ENCODE measurements at regions of chr5 and their contacts with region 1.

Region 1: DNA sequence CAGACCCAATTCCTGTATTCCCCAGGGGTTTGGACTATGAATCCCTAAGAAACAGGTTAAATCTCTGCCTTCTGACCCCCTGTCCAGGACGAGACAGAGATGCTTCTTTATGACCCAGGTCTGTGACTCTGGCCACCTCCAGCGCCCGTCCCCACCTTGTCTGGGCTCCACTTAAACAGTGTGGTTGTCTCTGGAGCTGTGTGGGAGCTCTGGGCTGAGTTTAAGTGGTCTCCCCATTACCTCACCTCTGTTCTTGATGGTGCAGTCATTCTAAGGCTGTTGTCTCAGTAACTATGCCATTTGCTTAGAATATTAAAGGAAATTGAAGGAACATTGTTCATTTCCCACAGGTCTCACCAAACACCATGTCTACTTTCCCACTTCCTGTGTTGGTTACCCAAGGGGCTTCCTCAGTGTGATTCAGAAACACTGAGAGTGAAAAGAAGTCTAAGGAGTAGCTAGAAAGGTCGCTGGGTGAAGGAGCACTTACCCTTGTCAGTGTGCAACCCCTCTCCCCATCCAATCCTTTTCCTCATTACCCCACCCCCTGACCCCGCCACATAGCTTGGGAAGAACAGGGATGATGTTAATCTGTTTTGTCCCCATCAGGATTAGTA is 127.8 kb upstream of the CKMT2 start:
- DNase-seq: no peak
- ATAC-seq: peak; percentile 47
- H3K4me3 Mint-ChIP-seq: no peak overlapping the region
- H3K27ac Mint-ChIP-seq: peak overlapping the region; percentile 42
- H3K4me1 Mint-ChIP-seq: peaks cover 23% of the 10 kb centered on the region
- H3K27me3 Mint-ChIP-seq: no peaks in the 10 kb centered on the region

Region 2: DNA sequence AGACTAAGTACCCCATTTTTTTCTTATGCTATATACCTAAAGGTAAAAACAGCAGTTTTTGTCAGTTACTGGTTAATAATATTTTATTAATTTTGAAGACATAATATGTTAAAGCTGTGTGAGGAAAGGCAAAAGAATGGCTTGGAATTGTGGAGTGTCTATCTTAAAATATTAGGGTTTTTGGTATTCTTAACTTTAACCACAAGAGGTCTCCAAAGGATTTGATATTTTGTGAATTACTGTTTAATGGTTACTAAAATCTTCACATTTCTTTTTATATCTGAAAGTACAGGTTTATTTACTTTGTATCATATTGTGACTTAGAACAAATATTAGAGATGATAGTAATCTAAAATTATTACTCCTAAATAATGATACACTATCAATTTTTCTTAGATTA is 418.6 kb before region 1 on chr5:
- CTCF ChIA-PET with region 1: interaction called, 12 read pairs
- POLR2A ChIA-PET with region 1: no interaction called
- intact Hi-C with region 1: loop called (anchors 1 to 2 kb)
- DNase-seq: no peak
- ATAC-seq: no peak
- H3K4me3 Mint-ChIP-seq: no peak overlapping the region
- H3K27ac Mint-ChIP-seq: no peak overlapping the region
- H3K4me1 Mint-ChIP-seq: peaks cover 15% of the 10 kb centered on the region
- H3K27me3 Mint-ChIP-seq: no peaks in the 10 kb centered on the region

Region 3: DNA sequence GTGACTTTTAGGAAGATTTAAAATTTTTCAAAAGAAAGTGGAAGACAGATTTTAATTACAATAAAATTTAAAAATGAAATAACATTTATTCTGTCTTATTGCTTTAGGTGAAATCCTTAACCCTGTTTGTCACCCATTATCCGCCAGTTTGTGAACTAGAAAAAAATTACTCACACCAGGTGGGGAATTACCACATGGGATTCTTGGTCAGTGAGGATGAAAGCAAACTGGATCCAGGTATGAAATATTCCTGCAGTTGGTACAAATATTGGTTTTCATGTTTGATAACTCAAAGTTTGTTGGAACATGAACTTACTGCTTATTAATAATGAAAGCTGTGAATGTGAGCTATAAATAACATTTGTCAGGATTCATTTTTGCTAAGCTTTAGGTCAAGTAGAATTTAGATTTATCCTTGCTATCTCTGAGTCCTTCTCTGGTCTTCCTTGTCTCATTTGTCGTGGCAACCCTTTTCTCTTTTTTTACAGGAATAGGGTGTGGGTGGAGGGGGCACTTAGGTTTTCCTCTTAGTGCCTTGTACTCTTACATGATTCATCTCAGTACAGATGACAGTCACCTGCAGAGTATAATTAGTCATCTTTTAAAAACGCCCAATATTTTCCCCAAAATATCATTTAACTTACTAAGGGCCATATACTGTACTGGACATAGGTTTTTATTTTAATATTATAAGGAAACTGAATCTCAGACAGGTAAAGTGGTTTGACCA is 240.5 kb before region 1 on chr5:
- CTCF ChIA-PET with region 1: interaction called, 3 read pairs
- POLR2A ChIA-PET with region 1: no interaction called
- intact Hi-C with region 1: loop called in 1 of 2 experiments (anchors 5 kb)
- DNase-seq: peak; percentile 39
- ATAC-seq: peak; percentile 78
- H3K4me3 Mint-ChIP-seq: no peak overlapping the region
- H3K27ac Mint-ChIP-seq: peak overlapping the region; percentile 21
- H3K4me1 Mint-ChIP-seq: peaks cover 53% of the 10 kb centered on the region
- H3K27me3 Mint-ChIP-seq: no peaks in the 10 kb centered on the region

Region 4: GRCh38 chr5:81020478-81021174 is 84.7 kb before region 1 on chr5:
- CTCF ChIA-PET with region 1: no interaction called
- POLR2A ChIA-PET with region 1: no interaction called
- intact Hi-C with region 1: loop called in 1 of 2 experiments (anchors 2 kb)
- DNase-seq: no peak
- ATAC-seq: no peak
- H3K4me3 Mint-ChIP-seq: no peak overlapping the region
- H3K27ac Mint-ChIP-seq: no peak overlapping the region
- H3K4me1 Mint-ChIP-seq: peaks cover 90% of the 10 kb centered on the region
- H3K27me3 Mint-ChIP-seq: no peaks in the 10 kb centered on the region

Region 5: DNA sequence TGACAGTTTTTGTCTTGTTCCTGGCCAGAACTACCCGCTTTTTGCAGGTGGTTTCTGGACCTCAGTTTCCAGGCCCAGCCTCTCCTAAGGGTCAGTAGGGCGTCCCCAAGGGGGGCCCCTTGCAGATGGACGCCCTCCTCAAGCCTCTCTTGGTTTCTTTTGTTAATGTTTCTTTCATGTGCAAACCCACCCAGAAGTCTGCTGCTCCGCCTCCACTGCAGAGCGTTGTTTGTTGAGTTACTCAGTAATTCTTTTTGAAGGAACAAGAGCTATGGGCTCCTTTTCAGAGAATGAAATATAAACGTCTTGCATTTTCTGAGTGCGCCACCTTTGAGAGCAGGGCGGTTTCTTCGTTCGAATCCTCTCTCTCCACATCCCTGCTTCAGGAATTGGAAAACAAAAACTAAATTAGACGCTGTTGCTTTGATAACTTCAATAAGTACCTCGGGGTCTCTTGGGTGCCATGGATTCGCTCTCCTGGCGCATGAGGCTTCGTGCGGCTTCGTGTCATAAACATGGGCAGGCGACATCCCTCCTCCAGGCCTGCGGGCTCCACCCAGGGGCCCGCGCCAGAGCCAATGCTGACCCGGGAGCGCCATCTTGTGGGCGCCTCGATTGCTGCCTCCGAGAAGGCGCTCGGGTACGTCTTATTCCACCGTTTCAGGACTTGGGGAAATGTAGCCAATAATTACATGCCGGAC is 89.4 kb after region 1 on chr5:
- CTCF ChIA-PET with region 1: interaction called, 5 read pairs
- POLR2A ChIA-PET with region 1: no interaction called
- intact Hi-C with region 1: loop called in 1 of 2 experiments (anchors 1 kb)
- DNase-seq: peak; percentile 92
- ATAC-seq: peak; percentile 99
- H3K4me3 Mint-ChIP-seq: peak overlapping the region; percentile 15
- H3K27ac Mint-ChIP-seq: no peak overlapping the region
- H3K4me1 Mint-ChIP-seq: peaks cover 9% of the 10 kb centered on the region
- H3K27me3 Mint-ChIP-seq: no peaks in the 10 kb centered on the region